T-cell (primary cell): ENCODE measurements at regions of chr2 and their contacts with region 1.

Region 1: GRCh38 chr2:156589381-156590079 is 153.4 kb downstream of the GPD2 start:
- DNase-seq: peak in 19 of 35 experiments; percentile 0 to 63 (median 5)
- ATAC-seq: peak; percentile 43 to 68 (median 48)
- H3K4me3 ChIP-seq: no peak overlapping the region
- H3K4me3 Mint-ChIP-seq: no peak overlapping the region
- H3K27ac ChIP-seq: no peak overlapping the region
- H3K27ac Mint-ChIP-seq: no peak overlapping the region
- H3K4me1 ChIP-seq: no peaks in the 10 kb centered on the region
- H3K4me1 Mint-ChIP-seq: peaks cover 0 to 4% (median 2%) of the 10 kb centered on the region in 3 donors
- H3K27me3 ChIP-seq: no peaks in the 10 kb centered on the region
- H3K27me3 Mint-ChIP-seq: no peaks in the 10 kb centered on the region

Region 2: GRCh38 chr2:155377266-155377680 is 1212.3 kb before region 1 on chr2:
- CTCF ChIA-PET with region 1: interaction called, 6 to 14 read pairs
- POLR2A ChIA-PET with region 1: no interaction called
- DNase-seq: peak in 1 of 35 experiments; percentile 6
- ATAC-seq: no peak
- H3K4me3 ChIP-seq: no peak overlapping the region
- H3K4me3 Mint-ChIP-seq: no peak overlapping the region
- H3K27ac ChIP-seq: no peak overlapping the region
- H3K27ac Mint-ChIP-seq: no peak overlapping the region
- H3K4me1 ChIP-seq: no peaks in the 10 kb centered on the region
- H3K4me1 Mint-ChIP-seq: no peaks in the 10 kb centered on the region
- H3K27me3 ChIP-seq: no peaks in the 10 kb centered on the region
- H3K27me3 Mint-ChIP-seq: no peaks in the 10 kb centered on the region

Region 3: GRCh38 chr2:156192468-156192867 is 397.1 kb before region 1 on chr2:
- CTCF ChIA-PET with region 1: interaction called, 9 to 12 read pairs
- POLR2A ChIA-PET with region 1: no interaction called
- DNase-seq: peak in 1 of 35 experiments; percentile 27
- ATAC-seq: no peak
- H3K4me3 ChIP-seq: no peak overlapping the region
- H3K4me3 Mint-ChIP-seq: no peak overlapping the region
- H3K27ac ChIP-seq: no peak overlapping the region
- H3K27ac Mint-ChIP-seq: no peak overlapping the region
- H3K4me1 ChIP-seq: no peaks in the 10 kb centered on the region
- H3K4me1 Mint-ChIP-seq: no peaks in the 10 kb centered on the region
- H3K27me3 ChIP-seq: no peaks in the 10 kb centered on the region
- H3K27me3 Mint-ChIP-seq: no peaks in the 10 kb centered on the region

Region 4: GRCh38 chr2:157245846-157246764 is 656.6 kb after region 1 on chr2:
- CTCF ChIA-PET with region 1: no interaction called
- POLR2A ChIA-PET with region 1: no interaction called
- DNase-seq: no peak
- ATAC-seq: no peak
- H3K4me3 ChIP-seq: no peak overlapping the region
- H3K4me3 Mint-ChIP-seq: no peak overlapping the region
- H3K27ac ChIP-seq: no peak overlapping the region
- H3K27ac Mint-ChIP-seq: no peak overlapping the region
- H3K4me1 ChIP-seq: no peaks in the 10 kb centered on the region
- H3K4me1 Mint-ChIP-seq: no peaks in the 10 kb centered on the region
- H3K27me3 ChIP-seq: no peaks in the 10 kb centered on the region
- H3K27me3 Mint-ChIP-seq: peaks cover 2 to 6% of the 10 kb centered on the region in 2 donors